ENCODE measurements at regions of chr16 and their contacts with region 1.

Region 1: DNA sequence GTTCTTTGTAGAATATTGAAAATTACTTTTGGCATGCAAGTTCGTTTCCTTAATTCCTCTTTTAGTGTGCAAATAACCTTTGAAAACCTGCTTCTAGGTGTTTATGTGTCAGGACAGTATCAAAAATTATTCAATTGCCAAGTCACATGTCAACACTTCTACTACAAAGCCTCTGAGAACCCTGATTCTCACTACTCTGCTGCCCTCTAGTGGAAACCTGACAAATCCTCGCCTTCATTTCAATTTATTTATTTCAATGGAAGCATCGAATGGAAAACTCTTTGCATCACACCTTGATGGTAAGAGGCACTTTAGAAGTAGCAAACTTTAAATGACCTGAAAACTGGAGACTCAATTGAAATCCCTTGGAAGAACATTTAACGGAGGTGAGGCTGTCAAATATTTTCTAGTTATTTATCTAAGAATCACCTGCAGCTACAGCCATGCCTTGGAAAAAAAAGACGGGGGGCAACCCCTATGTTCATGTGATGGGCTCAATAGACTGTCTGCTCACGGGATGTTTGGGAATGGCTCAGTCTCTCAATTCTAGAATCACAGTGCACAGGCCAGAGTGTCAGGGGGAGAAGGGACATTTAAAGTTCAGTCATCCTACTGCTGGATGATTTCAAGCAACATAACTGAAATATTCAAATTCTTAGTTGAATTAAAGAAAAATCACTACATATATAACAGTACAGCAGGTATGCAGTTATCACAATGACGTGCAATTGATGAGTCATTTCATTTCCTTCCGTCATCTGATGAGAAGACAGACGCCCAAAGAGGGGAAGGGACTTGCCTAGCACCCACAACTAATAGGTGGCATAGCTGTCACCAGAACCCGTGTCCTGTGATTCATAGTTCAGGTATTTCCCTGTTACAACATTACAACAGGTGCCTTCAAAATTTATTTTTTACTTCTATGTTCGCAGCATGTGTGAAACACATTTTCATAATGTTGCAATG is 563.9 kb downstream of the TOX3 start:
- DNase-seq: peak in 1 of 3 donors; percentile 57
- ATAC-seq: peak; percentile 74 to 76 (median 74)
- H3K4me3 ChIP-seq: no peak overlapping the region
- H3K27ac ChIP-seq: peak overlapping the region in 1 of 3 donors; percentile 3
- H3K4me1 ChIP-seq: peaks cover 0 to 25% (median 5%) of the 10 kb centered on the region in 4 donors
- H3K27me3 ChIP-seq: no peaks in the 10 kb centered on the region
- CTCF ChIP-seq: peak; percentile 74 to 86 (median 78)
- POLR2A ChIP-seq: no peak

Region 2: DNA sequence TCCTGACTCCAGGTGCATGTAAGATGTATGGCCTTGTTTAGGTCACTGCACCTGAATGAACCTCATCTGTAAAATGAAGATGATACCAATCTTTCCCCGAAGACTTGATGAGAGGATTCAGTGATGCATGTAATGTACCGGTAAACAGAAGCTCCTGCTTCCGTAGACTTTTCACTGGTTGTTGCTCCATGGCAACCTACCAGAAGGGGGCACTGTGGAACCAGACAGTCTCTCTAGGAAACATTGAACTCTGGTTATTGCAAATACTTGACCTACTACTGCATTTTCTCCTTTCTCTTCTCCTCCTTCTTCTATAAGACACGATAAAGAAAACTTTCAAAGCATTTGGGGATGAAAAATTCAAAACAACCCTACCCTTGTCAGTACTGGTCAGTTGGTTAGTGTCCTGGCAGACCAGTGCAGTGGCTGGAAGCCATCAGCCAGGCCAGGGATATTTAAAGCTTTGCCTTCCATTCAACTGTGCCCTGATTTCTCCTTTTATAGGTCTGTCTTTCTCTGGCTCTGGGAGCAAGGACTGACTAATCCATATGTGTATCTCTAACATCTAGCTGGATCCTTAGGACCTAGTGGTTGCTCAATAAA is 164.6 kb before region 1 on chr16:
- intact Hi-C with region 1: loop called in 1 of 2 experiments (anchors 10 kb)
- DNase-seq: peak; percentile 33 to 60 (median 52)
- ATAC-seq: peak; percentile 70 to 88 (median 81)
- H3K4me3 ChIP-seq: no peak overlapping the region
- H3K27ac ChIP-seq: no peak overlapping the region
- H3K4me1 ChIP-seq: no peaks in the 10 kb centered on the region
- H3K27me3 ChIP-seq: no peaks in the 10 kb centered on the region
- CTCF ChIP-seq: peak; percentile 68 to 87 (median 72)
- POLR2A ChIP-seq: no peak